Endothelial cell of umbilical vein (primary cell): ENCODE measurements at regions of chr2 and their contacts with region 1.

Region 1: DNA sequence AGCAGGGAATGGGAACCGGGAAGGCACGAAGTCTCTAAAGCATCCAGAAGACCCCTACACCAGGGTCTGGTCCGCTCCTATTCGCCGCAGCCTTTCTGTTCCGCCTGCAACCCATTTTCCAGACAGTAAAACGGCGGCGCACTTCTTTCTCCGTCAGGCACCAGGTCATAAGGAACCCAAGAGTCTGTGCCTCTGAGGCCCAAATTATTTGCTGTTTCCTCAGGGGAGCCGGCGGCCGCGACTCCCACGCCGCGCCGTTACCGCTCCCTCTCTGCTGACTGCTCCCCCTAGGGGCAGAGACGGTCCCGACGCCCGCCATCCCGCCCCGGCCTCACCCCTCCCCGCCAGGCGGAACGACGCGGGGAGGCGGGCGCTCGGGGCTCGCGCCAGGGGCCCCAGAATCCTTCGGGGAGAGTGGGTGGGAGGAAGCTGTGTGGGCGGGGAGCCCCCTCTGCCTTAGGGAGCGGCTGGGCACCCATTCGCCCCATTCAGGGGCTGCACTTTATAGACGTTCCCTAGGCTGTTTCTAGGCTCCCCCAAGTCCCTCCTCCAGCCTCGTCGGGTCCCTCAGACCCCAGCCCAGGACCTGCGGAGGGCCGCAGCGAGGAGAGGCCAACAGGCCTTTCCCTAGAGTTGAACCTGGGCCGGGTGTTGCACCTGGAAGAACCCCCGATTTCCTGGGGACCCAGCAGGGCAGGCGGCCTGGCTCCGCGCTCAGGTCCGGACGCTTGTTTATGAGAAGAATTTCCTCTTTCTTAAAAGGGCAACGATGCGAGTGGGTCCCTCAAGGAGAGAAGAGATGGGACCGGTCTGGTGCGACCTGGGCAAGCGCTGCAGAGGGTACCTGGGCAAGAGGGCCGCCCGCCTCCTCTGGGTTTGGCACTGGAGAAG is 3.6 kb upstream of the CTDSP1 start:
- DNase-seq: peak; percentile 95
- H3K4me3 ChIP-seq: peak overlapping the region; percentile 23 to 55 (median 51)
- H3K27ac ChIP-seq: peak overlapping the region; percentile 82
- H3K4me1 ChIP-seq: peaks cover 28% of the 10 kb centered on the region
- H3K27me3 ChIP-seq: no peaks in the 10 kb centered on the region
- CTCF ChIP-seq: peak; percentile 71 to 87
- POLR2A ChIP-seq: peak; percentile 20

Region 2: DNA sequence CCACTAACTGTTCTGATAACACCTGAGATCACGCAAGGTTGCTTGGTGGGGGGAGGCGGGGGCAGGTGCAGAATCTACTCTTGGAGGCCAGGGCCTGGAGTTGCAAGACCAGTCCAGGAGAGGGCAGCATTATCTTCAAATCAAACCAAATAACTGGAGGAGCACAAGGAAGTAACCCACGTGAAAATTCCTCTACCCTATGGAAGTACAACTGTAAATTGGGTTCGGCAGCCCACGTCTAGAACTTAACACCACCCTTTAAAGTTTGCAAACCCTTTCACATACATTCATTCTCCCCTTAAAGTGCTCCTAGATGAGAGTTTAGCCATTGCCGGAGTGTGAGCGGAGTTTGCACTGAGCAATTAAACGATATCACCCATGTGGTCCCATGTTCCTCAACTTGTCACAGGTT is 209.7 kb before region 1 on chr2:
- CTCF ChIA-PET with region 1: interaction called, 9 read pairs
- POLR2A ChIA-PET with region 1: no interaction called
- dilution Hi-C with region 1: no loop called
- intact Hi-C with region 1: loop called (anchors 1 kb)
- DNase-seq: peak; percentile 73
- H3K4me3 ChIP-seq: no peak overlapping the region
- H3K27ac ChIP-seq: no peak overlapping the region
- H3K4me1 ChIP-seq: no peaks in the 10 kb centered on the region
- H3K27me3 ChIP-seq: peaks cover 3 to 10% of the 10 kb centered on the region in 2 experiments
- CTCF ChIP-seq: peak; percentile 76 to 77
- POLR2A ChIP-seq: no peak

Region 3: GRCh38 chr2:218286570-218287459 is 109.2 kb before region 1 on chr2:
- CTCF ChIA-PET with region 1: interaction called, 27 read pairs
- POLR2A ChIA-PET with region 1: no interaction called
- dilution Hi-C with region 1: no loop called
- intact Hi-C with region 1: loop called (anchors 1 kb)
- DNase-seq: peak; percentile 93
- H3K4me3 ChIP-seq: no peak overlapping the region
- H3K27ac ChIP-seq: peak overlapping the region; percentile 88
- H3K4me1 ChIP-seq: peaks cover 77% of the 10 kb centered on the region
- H3K27me3 ChIP-seq: no peaks in the 10 kb centered on the region
- CTCF ChIP-seq: no peak
- POLR2A ChIP-seq: peak; percentile 16

Region 4: GRCh38 chr2:218301176-218301819 is 94.7 kb before region 1 on chr2:
- CTCF ChIA-PET with region 1: interaction called, 46 read pairs
- POLR2A ChIA-PET with region 1: interaction called, 4 read pairs
- dilution Hi-C with region 1: no loop called
- intact Hi-C with region 1: loop called (anchors 1 kb)
- DNase-seq: peak; percentile 88
- H3K4me3 ChIP-seq: no peak overlapping the region
- H3K27ac ChIP-seq: no peak overlapping the region
- H3K4me1 ChIP-seq: peaks cover 6% of the 10 kb centered on the region
- H3K27me3 ChIP-seq: no peaks in the 10 kb centered on the region
- CTCF ChIP-seq: peak; percentile 86
- POLR2A ChIP-seq: no peak

Region 5: DNA sequence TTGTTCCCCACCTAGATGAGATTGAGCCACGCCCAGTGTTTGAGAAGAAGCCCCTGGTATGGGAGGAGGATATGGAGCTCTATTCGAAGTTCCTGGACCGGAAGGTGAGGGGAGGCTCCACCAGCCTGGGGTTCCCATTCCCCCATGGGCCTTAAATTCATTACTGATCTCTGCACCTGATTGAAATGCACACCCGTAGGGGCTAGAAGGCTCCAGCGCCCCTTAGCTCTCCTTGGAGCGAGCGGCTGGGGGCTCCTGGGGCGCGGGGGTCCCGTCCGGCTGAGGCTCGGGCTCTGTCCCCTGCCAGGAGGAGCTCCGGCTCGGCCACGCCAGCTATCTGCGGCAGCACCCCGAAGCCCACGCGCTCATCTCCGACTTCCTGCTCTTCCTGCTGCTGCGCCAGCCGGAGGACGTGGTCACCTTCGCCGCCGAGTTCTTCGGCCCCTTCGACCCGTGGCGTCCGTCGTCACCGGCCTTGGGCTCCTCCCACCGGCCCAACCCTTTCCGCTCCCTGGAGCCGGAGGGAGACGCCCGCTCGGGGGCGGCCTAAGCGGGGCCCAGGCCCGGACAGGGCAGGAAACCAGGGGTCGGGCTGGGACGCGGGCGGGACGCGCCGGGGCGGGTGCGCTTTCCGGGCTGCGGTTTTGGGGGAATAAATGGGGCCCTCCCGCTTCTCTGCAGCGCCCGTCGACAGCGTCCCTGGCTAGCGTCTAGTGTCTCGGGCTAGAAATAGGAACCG is 28.5 kb before region 1 on chr2:
- CTCF ChIA-PET with region 1: interaction called, 4 read pairs
- POLR2A ChIA-PET with region 1: no interaction called
- dilution Hi-C with region 1: no loop called
- intact Hi-C with region 1: loop called (anchors 1 kb)
- DNase-seq: peak; percentile 53
- H3K4me3 ChIP-seq: peak overlapping the region; percentile 14 to 41 (median 34)
- H3K27ac ChIP-seq: no peak overlapping the region
- H3K4me1 ChIP-seq: no peaks in the 10 kb centered on the region
- H3K27me3 ChIP-seq: no peaks in the 10 kb centered on the region
- CTCF ChIP-seq: no peak
- POLR2A ChIP-seq: peak; percentile 71

Region 6: DNA sequence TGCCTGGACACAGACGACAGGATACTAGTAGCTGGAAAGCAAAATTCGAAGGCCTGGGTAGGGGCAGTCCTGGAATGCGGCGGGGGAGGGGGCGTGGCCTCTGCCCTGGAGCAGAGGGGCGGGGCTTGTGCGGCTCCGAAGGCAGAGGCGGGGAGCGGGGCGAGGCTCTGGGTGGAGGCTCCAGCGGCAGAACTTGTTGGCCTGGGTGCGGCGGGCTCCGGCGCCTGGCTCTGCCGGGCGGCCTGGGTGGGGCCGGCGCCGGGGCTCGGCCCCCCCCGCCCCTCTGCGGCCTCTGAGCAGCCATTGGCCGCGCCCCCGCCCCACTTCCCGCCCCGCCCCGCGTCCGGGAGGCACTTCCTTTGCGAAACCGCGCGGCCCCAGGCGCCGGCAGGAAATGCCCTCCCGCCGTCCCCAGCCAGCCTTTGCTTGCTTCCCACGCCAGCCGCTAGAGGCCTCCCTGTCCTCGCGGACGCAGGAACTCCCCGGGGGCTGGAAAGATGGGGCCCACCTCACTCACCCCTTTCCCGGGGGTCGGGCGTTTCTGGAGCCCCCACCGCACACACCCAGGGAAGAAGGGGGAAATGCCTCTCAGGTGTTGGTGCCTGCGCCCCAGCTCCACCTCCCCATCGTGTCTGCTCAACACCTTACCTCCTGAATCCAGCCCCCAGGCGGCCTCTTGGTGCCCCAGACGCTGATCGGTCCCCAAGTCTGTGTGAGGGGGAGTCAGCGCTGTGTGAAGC is 10.3 kb after region 1 on chr2:
- CTCF ChIA-PET with region 1: interaction called, 14 read pairs
- POLR2A ChIA-PET with region 1: no interaction called
- dilution Hi-C with region 1: no loop called
- intact Hi-C with region 1: loop called (anchors 1 kb)
- DNase-seq: peak; percentile 94
- H3K4me3 ChIP-seq: peak overlapping the region; percentile 16 to 25 (median 18)
- H3K27ac ChIP-seq: peak overlapping the region; percentile 81
- H3K4me1 ChIP-seq: peaks cover 22% of the 10 kb centered on the region
- H3K27me3 ChIP-seq: no peaks in the 10 kb centered on the region
- CTCF ChIP-seq: peak; percentile 66 to 91
- POLR2A ChIP-seq: peak; percentile 80

Region 7: DNA sequence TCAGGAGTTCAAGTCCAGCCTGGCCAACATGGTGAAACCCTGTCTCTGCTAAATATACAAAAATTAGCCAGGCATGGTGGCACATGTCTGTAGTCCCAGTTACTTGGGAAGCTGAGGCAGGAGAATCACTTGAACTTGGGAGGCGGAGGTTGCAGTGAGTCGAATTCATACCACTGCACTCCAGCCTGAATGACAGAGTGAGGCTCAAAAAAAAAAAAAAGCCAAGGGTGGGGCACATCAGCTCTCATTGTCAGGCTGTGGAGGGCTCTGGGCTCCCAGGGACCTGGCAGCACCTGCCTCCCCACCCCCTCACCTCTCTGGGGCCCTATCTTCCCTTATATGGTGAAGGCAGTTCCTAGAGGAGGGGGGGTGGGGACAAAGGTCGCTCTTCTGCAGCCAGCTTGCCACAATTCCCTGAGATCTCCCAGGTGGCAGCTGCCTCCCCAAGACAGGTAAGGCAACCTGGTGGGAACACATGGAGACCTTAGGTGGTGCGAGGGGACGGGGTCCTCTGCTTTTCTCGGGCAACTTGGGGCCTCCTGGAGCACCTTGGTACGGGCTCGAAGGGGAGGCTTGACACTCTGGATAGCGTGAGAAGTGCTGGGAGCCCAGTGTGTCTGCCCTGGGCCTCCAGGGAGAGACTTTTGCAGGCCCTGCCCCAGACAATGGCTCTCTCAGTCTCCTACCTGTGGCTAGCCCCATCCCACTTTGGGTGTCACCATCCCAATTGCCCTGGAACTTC is 22.8 kb after region 1 on chr2 and contains the start of gene VIL1:
- CTCF ChIA-PET with region 1: no interaction called
- POLR2A ChIA-PET with region 1: no interaction called
- dilution Hi-C with region 1: no loop called
- intact Hi-C with region 1: no loop called
- DNase-seq: no peak
- H3K4me3 ChIP-seq: no peak within 1 kb of the TSS
- H3K27ac ChIP-seq: no peak within 1 kb of the TSS
- H3K4me1 ChIP-seq: no peaks in the 10 kb centered on the region
- H3K27me3 ChIP-seq: no peaks in the 10 kb centered on the region
- CTCF ChIP-seq: no peak
- POLR2A ChIP-seq: no peak
- total RNA-seq, gene VIL1: not detected in 2 replicates

Region 8: GRCh38 chr2:218568190-218569037 is 172.4 kb after region 1 on chr2 and contains the starts of genes CNOT9 and USP37:
- CTCF ChIA-PET with region 1: no interaction called
- POLR2A ChIA-PET with region 1: no interaction called
- dilution Hi-C with region 1: no loop called
- intact Hi-C with region 1: loop called (anchors 2 kb)
- DNase-seq: peak; percentile 99
- H3K4me3 ChIP-seq: peak within 1 kb of the TSS; percentile 58 to 81 (median 71)
- H3K27ac ChIP-seq: peak within 1 kb of the TSS; percentile 94
- H3K4me1 ChIP-seq: peaks cover 17% of the 10 kb centered on the region
- H3K27me3 ChIP-seq: no peaks in the 10 kb centered on the region
- CTCF ChIP-seq: no peak
- POLR2A ChIP-seq: peak; percentile 81
- total RNA-seq, gene CNOT9: 63.2 and 68.9 TPM in 2 replicates
- total RNA-seq, gene USP37: 13.1 and 14.4 TPM in 2 replicates